Endothelial cell of umbilical vein (primary cell): ENCODE measurements at regions of chr9 and their contacts with region 1.

Region 1: DNA sequence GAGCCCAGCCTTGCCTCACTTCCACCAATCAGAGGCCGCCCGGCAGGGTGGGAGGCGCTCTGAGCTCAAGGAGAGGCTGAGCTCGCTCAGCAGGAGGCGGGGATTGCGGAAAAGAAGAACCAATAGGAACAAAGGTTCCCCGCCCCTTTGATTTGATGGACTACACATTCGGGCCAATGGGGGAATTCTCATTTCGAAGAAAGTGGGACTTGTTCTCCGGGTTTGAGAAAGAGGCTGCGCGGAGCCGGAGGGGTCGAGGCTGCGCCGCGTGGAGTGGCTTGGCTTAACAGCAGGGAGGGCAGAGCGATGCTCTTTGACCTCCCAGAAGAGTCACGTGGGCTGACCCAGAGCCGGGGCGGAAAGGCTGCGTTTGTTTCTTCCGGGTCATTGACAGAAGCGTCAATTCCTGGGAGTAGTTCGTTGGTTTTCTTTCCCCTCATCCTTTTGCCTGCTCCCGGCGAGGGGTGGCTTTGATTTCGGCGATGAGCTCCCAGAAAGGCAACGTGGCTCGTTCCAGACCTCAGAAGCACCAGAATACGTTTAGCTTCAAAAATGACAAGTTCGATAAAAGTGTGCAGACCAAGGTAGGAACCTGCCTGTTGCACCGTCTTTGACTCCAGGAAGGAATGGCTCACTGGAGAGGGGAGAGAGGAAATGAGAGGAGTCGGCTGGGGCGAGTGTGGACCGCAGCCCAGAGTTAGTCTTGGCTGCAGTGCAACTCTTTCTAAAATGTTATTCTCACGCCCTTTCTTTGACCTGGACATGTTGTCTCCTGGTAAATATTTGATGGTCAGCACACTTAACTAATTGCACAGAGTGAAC is at the start of gene C9orf85:
- DNase-seq: peak; percentile 100
- H3K4me3 ChIP-seq: peak within 1 kb of the TSS; percentile 70 to 99 (median 97)
- H3K27ac ChIP-seq: peak within 1 kb of the TSS; percentile 83
- H3K4me1 ChIP-seq: peaks cover 20% of the 10 kb centered on the region
- H3K27me3 ChIP-seq: no peaks in the 10 kb centered on the region
- CTCF ChIP-seq: no peak
- POLR2A ChIP-seq: no peak
- total RNA-seq, gene C9orf85: 10.3 and 11.3 TPM in 2 replicates

Region 2: DNA sequence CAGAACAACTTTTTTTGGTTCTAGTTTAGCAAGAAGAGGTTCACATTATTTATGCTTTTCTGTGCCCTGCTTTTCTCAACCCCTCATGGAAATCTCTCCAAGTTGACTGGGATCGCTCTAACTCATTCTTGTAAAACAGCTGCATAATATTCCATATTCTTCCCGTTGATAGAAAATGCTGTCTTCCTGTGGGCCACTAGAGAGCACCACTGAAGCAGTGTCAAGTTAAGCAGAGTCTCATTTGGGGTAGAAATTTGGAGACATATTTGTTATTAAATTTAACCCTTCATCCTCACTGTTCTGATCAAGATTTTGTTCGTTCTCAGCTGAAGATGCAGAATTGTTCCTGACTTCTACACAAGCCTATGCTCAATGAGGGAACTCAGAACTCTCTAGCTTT is 283.2 kb before region 1 on chr9:
- CTCF ChIA-PET with region 1: no interaction called
- POLR2A ChIA-PET with region 1: no interaction called
- dilution Hi-C with region 1: no loop called
- intact Hi-C with region 1: loop called (anchors 2 kb)
- DNase-seq: no peak
- H3K4me3 ChIP-seq: no peak overlapping the region
- H3K27ac ChIP-seq: no peak overlapping the region
- H3K4me1 ChIP-seq: peaks cover 20% of the 10 kb centered on the region
- H3K27me3 ChIP-seq: no peaks in the 10 kb centered on the region
- CTCF ChIP-seq: no peak
- POLR2A ChIP-seq: no peak

Region 3: DNA sequence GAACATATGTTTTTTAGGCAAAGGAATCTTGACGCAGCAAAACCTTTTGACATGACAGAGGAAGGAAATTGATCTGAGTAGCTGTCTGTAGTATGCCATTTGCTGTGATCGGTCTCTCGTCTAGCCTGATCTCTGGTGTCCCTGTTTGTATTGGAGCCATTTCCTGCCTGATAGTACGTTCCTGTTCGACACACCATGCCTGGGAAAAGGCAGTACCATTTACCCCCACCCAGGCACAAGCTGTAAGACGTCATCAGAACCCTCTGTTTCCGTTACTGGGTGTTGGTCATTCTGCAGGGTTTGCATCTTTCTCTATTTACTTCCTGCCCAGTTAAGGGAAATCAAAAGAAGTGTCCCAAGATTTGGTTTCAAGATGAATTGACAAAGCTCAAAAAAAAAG is 272.8 kb before region 1 on chr9:
- CTCF ChIA-PET with region 1: no interaction called
- POLR2A ChIA-PET with region 1: no interaction called
- dilution Hi-C with region 1: no loop called
- intact Hi-C with region 1: loop called (anchors 2 kb)
- DNase-seq: peak; percentile 72
- H3K4me3 ChIP-seq: peak overlapping the region in 1 of 3 experiments; percentile 12
- H3K27ac ChIP-seq: peak overlapping the region; percentile 57
- H3K4me1 ChIP-seq: peaks cover 23% of the 10 kb centered on the region
- H3K27me3 ChIP-seq: no peaks in the 10 kb centered on the region
- CTCF ChIP-seq: no peak
- POLR2A ChIP-seq: no peak

Region 4: DNA sequence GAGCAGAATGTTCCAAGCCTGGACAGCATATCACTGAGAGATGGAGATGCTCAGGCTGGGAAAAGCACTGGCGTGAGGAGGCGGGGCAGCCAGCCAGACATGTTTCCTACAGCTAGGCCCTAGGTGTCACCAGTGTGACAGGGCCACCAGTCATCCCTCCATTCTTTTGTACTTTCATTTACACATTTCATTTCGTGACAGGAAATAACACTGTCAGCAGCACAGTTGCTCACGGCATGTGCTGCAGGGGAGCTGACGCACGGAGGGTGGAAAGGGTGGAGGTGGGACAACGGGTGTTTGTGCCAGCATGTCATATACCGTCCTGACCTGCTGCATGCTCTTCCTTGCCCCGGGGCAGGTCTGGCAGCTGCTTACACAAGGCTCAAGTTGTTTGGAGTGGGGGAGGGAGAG is 128.3 kb before region 1 on chr9:
- CTCF ChIA-PET with region 1: no interaction called
- POLR2A ChIA-PET with region 1: no interaction called
- dilution Hi-C with region 1: no loop called
- intact Hi-C with region 1: no loop called
- DNase-seq: no peak
- H3K4me3 ChIP-seq: no peak overlapping the region
- H3K27ac ChIP-seq: no peak overlapping the region
- H3K4me1 ChIP-seq: no peaks in the 10 kb centered on the region
- H3K27me3 ChIP-seq: no peaks in the 10 kb centered on the region
- CTCF ChIP-seq: no peak
- POLR2A ChIP-seq: no peak

Region 5: DNA sequence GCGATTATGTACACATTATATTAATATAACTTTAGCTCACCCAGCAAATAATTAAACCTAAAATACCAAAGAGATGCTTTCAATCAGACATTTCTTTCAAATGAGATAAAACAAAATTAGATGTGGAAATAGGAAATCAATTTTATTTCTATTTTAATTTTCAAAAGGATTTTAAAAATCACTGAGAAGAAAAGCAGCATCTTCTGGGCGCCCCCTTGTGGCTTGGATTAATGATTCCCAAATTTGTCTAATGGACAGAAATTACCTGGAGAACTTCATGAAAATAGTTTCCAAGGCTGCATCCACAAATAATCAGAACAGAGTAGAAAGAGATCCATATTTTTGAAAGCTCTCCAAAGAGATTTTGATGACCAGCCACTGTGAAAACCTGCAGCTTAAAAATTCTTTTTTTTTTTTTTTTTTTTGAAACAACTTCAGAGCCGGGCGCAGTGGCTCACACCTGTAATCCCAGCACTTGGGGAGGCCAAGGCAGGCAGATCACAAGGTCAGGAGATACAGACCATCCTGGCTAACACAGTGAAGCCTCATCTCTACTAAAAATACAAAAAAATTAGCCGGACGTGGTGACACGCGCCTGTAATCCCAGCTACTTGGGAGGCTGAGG is 92.2 kb before region 1 on chr9:
- CTCF ChIA-PET with region 1: interaction called, 5 read pairs
- POLR2A ChIA-PET with region 1: interaction called, 3 read pairs
- dilution Hi-C with region 1: no loop called
- intact Hi-C with region 1: loop called (anchors 1 kb)
- DNase-seq: peak; percentile 35
- H3K4me3 ChIP-seq: no peak overlapping the region
- H3K27ac ChIP-seq: no peak overlapping the region
- H3K4me1 ChIP-seq: peaks cover 4% of the 10 kb centered on the region
- H3K27me3 ChIP-seq: peaks cover 0 to 2% of the 10 kb centered on the region in 2 experiments
- CTCF ChIP-seq: peak; percentile 44 to 49
- POLR2A ChIP-seq: no peak

Region 6: DNA sequence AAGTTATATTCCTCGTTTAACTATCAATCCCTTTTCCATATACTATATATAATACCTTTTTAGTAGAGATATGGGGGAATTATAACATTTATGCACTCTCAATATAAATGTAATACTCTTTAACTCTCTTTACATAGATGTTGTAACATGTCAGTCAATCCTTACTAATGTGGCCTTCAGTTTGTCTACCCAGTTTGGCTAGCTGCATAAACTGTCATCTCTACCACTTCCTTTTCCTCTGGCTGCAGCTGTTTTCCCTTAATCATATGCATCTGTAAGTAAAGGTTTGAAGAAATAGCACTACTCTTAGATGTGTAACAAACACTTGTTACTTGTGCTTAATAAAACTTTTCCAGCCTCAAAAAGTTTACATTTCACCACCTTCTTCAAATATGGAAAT is 13.9 kb before region 1 on chr9:
- CTCF ChIA-PET with region 1: interaction called, 3 read pairs
- POLR2A ChIA-PET with region 1: interaction called, 11 read pairs
- dilution Hi-C with region 1: no loop called
- intact Hi-C with region 1: no loop called
- DNase-seq: peak; percentile 15
- H3K4me3 ChIP-seq: no peak overlapping the region
- H3K27ac ChIP-seq: no peak overlapping the region
- H3K4me1 ChIP-seq: no peaks in the 10 kb centered on the region
- H3K27me3 ChIP-seq: no peaks in the 10 kb centered on the region
- CTCF ChIP-seq: no peak
- POLR2A ChIP-seq: no peak

Region 7: DNA sequence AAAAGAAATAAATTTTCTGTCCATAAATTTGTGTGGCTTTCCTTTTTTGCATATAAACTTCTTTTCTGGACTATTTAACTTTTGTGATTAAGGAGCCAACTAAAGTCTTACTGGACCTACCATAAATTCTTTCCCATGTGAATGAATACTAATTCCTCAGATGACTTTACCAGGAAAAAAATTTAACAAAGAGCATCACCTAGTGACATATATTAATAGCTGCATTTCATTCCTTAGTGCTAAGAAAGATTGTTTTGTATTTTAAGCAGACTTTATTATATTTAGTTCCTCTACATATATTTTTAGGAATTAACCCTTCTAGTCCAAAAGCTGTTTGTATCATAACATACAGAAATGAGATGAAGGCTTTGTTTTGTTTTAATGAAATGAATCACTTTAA is 64.4 kb after region 1 on chr9:
- CTCF ChIA-PET with region 1: no interaction called
- POLR2A ChIA-PET with region 1: no interaction called
- dilution Hi-C with region 1: no loop called
- intact Hi-C with region 1: no loop called
- DNase-seq: no peak
- H3K4me3 ChIP-seq: no peak overlapping the region
- H3K27ac ChIP-seq: no peak overlapping the region
- H3K4me1 ChIP-seq: no peaks in the 10 kb centered on the region
- H3K27me3 ChIP-seq: no peaks in the 10 kb centered on the region
- CTCF ChIP-seq: no peak
- POLR2A ChIP-seq: no peak